OCI-LY7 (cell line): ENCODE measurements at regions of chr1 and their contacts with region 1.

Region 1: GRCh38 chr1:9004700-9005394 is 21.4 kb downstream of the SLC2A7 start:
- DNase-seq: peak; percentile 88
- H3K4me3 ChIP-seq: no peak overlapping the region
- H3K27ac ChIP-seq: no peak overlapping the region
- H3K4me1 ChIP-seq: peaks cover 41% of the 10 kb centered on the region
- CTCF ChIP-seq: peak; percentile 96

Region 2: GRCh38 chr1:8962812-8963530 is 41.9 kb before region 1 on chr1:
- CTCF ChIA-PET with region 1: interaction called, 8 read pairs
- POLR2A ChIA-PET with region 1: no interaction called
- intact Hi-C with region 1: loop called (anchors 1 kb)
- DNase-seq: peak; percentile 85
- H3K4me3 ChIP-seq: no peak overlapping the region
- H3K27ac ChIP-seq: no peak overlapping the region
- H3K4me1 ChIP-seq: peaks cover 12% of the 10 kb centered on the region
- CTCF ChIP-seq: peak; percentile 85

Region 3: GRCh38 chr1:9037476-9038337 is 32.9 kb after region 1 on chr1:
- CTCF ChIA-PET with region 1: no interaction called
- POLR2A ChIA-PET with region 1: interaction called, 4 read pairs
- intact Hi-C with region 1: loop called (anchors 2 kb)
- DNase-seq: peak; percentile 84
- H3K4me3 ChIP-seq: peak overlapping the region; percentile 1
- H3K27ac ChIP-seq: peak overlapping the region; percentile 89
- H3K4me1 ChIP-seq: peaks cover 59% of the 10 kb centered on the region
- CTCF ChIP-seq: no peak

Region 4: GRCh38 chr1:9088807-9089206 is 84.0 kb after region 1 on chr1:
- CTCF ChIA-PET with region 1: no interaction called
- POLR2A ChIA-PET with region 1: no interaction called
- intact Hi-C with region 1: no loop called
- DNase-seq: no peak
- H3K4me3 ChIP-seq: no peak overlapping the region
- H3K27ac ChIP-seq: no peak overlapping the region
- H3K4me1 ChIP-seq: peaks cover 23% of the 10 kb centered on the region
- CTCF ChIP-seq: no peak

Region 5: GRCh38 chr1:9101510-9102146 is 96.8 kb after region 1 on chr1:
- CTCF ChIA-PET with region 1: interaction called, 10 read pairs
- POLR2A ChIA-PET with region 1: interaction called, 4 read pairs
- intact Hi-C with region 1: loop called (anchors 1 kb)
- DNase-seq: peak; percentile 88
- H3K4me3 ChIP-seq: no peak overlapping the region
- H3K27ac ChIP-seq: no peak overlapping the region
- H3K4me1 ChIP-seq: peaks cover 35% of the 10 kb centered on the region
- CTCF ChIP-seq: peak; percentile 96

Region 6: DNA sequence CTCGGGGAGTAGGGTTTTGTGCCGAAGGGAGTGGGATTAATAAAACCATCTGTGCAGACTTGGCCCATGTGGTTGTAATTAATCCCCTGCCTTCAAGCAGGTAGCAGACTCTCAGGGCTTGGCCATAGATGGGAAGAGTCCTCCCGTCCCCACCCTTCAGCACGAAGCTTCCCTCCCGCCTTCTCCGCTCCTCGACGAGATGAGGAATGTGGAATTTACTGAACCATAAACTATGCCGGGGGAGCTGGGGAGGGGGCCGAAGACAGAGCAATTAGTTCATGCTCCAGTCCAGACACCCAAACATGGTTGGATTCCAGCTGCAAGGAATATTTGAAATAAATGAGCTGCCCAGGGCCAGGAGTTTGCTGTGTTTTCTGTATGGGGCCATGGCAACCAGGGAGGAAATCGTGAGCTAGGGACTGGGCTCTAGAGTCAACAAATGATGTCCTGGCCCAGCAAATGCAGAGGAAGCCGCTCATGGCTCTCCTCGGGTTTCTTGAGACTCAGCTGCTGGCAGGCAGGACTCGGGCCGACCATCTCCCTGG is 366.6 kb after region 1 on chr1:
- CTCF ChIA-PET with region 1: no interaction called
- POLR2A ChIA-PET with region 1: no interaction called
- intact Hi-C with region 1: no loop called
- DNase-seq: no peak
- H3K4me3 ChIP-seq: no peak overlapping the region
- H3K27ac ChIP-seq: no peak overlapping the region
- H3K4me1 ChIP-seq: peaks cover 10% of the 10 kb centered on the region
- CTCF ChIP-seq: no peak

Region 7: DNA sequence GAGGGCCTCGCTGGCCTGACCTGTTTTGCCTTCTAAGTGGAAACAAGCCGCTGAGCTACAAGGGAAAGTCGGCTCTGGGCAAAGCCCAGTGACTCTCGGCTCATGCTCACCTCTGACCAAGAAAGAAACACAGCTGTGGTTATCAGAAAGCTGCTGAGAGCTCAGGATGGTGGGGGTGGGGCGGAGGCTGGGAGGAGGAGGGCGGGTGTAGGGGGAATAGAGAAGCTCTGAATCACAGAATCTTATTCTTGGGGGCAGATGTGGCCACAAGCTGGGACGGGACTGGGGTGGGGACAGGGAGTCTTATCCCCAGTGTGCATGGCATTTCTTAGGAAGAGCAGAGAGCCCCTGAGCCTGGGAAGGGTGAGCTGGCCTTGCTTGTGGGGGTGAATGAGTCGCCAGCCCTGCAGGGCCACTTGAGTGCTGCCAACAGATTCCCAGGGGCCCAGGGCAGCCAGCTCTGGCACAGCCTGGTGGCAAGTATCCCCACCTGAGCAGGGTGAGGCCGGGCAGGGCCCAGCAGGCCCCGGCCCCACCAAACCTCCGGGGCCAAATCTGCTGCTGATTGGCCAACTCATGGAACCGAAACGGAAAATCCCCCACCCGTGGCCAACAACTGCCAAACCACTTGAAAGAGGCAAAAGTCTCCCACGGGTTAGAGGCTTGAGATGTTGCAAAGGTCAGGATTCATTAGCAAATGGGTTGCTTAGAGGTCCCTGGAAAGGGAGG is 408.5 kb after region 1 on chr1:
- CTCF ChIA-PET with region 1: interaction called, 12 read pairs
- POLR2A ChIA-PET with region 1: no interaction called
- intact Hi-C with region 1: no loop called
- DNase-seq: peak; percentile 90
- H3K4me3 ChIP-seq: peak overlapping the region; percentile 57
- H3K27ac ChIP-seq: peak overlapping the region; percentile 91
- H3K4me1 ChIP-seq: peaks cover 80% of the 10 kb centered on the region
- CTCF ChIP-seq: no peak